ENCODE measurements at regions of chr3 and their contacts with region 1.

Region 1: DNA sequence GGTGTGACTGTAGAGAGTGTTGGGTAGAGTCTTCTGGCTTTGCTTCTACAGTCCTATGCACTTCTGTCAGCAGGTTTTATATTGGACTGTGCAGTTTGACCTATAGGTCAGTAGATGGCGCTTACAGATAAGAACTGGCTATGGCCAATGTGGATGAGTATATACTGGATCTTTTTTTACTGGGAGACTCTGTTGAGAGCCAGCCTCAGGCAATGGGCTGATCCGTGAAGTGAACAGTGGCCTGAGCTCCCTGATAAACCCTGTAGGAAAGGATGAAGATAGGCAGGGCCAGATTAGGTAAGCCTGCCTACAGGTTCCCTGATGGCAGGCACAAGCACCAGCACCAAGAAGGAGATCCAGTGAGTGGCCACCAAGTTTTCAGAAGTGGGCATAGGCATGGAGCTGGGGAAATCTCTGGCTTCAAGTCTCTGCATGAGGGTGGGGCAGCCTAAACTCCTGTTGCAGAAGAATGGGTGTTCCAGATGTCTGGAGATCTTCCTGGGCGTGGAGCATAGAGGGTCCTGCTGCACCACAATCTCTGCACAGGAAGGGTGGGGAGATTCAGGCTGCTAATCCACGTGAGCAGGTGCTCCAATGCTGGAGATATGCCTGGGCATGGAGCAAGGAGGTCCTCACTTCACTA is 326.0 kb upstream of the SGO1 start:
- DNase-seq: peak; percentile 22 to 38
- H3K4me3 ChIP-seq: no peak overlapping the region
- H3K4me3 Mint-ChIP-seq: no peak overlapping the region
- H3K27ac Mint-ChIP-seq: no peak overlapping the region
- H3K4me1 ChIP-seq: no peaks in the 10 kb centered on the region
- H3K4me1 Mint-ChIP-seq: no peaks in the 10 kb centered on the region
- H3K27me3 ChIP-seq: no peaks in the 10 kb centered on the region
- H3K27me3 Mint-ChIP-seq: peaks cover 3% of the 10 kb centered on the region
- CTCF ChIP-seq: peak; percentile 45 to 65

Region 2: GRCh38 chr3:20668411-20668810 is 156.4 kb after region 1 on chr3:
- CTCF ChIA-PET with region 1: no interaction called
- POLR2A ChIA-PET with region 1: no interaction called
- intact Hi-C with region 1: loop called (anchors 2 kb)
- DNase-seq: peak; percentile 30
- H3K4me3 ChIP-seq: no peak overlapping the region
- H3K4me3 Mint-ChIP-seq: no peak overlapping the region
- H3K27ac Mint-ChIP-seq: no peak overlapping the region
- H3K4me1 ChIP-seq: no peaks in the 10 kb centered on the region
- H3K4me1 Mint-ChIP-seq: no peaks in the 10 kb centered on the region
- H3K27me3 ChIP-seq: no peaks in the 10 kb centered on the region
- H3K27me3 Mint-ChIP-seq: peaks cover 6% of the 10 kb centered on the region
- CTCF ChIP-seq: peak in 1 of 2 experiments; percentile 35

Region 3: DNA sequence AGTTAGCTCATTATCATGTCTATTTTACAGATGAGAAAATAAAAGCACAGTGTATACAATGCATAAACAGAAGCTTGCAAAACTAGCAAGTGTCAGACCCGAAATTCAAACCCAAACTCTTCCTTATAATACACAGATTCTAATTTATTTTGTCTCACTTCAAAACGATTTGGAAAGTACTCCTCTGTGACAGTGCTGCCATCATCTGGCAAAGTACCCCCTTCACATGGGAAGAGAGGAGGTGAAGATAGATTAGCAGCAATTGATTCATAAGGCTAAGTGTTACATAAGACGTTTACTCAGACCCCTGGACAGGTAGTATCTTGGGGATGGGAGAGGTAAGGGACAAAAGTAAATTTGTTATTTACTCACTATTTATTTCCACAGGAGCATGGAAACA is 418.1 kb after region 1 on chr3:
- CTCF ChIA-PET with region 1: no interaction called
- POLR2A ChIA-PET with region 1: no interaction called
- intact Hi-C with region 1: loop called (anchors 1 kb)
- DNase-seq: peak in 1 of 2 experiments; percentile 27
- H3K4me3 ChIP-seq: no peak overlapping the region
- H3K4me3 Mint-ChIP-seq: no peak overlapping the region
- H3K27ac Mint-ChIP-seq: no peak overlapping the region
- H3K4me1 ChIP-seq: no peaks in the 10 kb centered on the region
- H3K4me1 Mint-ChIP-seq: no peaks in the 10 kb centered on the region
- H3K27me3 ChIP-seq: no peaks in the 10 kb centered on the region
- H3K27me3 Mint-ChIP-seq: peaks cover 4% of the 10 kb centered on the region
- CTCF ChIP-seq: peak in 1 of 2 experiments; percentile 36

Region 4: DNA sequence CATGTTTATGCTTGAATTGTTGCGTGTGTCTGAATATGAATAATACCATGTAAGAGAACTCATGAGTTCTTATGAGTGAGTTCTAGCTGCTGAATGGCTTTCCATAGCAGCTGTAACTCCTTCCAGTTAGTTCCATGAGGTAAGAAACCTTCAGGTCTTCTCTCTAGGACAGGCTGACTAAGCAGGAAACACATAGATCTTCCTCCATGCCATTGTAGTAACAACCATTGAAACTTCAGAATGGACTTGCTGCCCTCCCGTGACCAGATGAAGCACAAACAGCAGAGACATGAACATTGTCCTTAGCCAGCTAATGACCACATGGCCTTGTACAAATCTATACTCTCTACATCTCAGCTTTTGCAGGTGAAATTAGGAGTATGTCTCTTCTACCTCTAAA is 1039.0 kb after region 1 on chr3:
- CTCF ChIA-PET with region 1: no interaction called
- POLR2A ChIA-PET with region 1: no interaction called
- intact Hi-C with region 1: loop called (anchors 5 kb)
- DNase-seq: peak in 1 of 2 experiments; percentile 34
- H3K4me3 ChIP-seq: no peak overlapping the region
- H3K4me3 Mint-ChIP-seq: no peak overlapping the region
- H3K27ac Mint-ChIP-seq: no peak overlapping the region
- H3K4me1 ChIP-seq: no peaks in the 10 kb centered on the region
- H3K4me1 Mint-ChIP-seq: no peaks in the 10 kb centered on the region
- H3K27me3 ChIP-seq: no peaks in the 10 kb centered on the region
- H3K27me3 Mint-ChIP-seq: no peaks in the 10 kb centered on the region
- CTCF ChIP-seq: peak in 1 of 2 experiments; percentile 8

Measured in Caco-2 (cell line).